ENCODE measurements at regions of chr9 and their contacts with region 1.

Region 1: GRCh38 chr9:36008774-36009300 is 27.9 kb upstream of the RECK start:
- DNase-seq: peak; percentile 54
- H3K4me3 ChIP-seq: no peak overlapping the region
- H3K27ac ChIP-seq: no peak overlapping the region
- H3K4me1 ChIP-seq: no peaks in the 10 kb centered on the region
- H3K27me3 ChIP-seq: peaks cover 2 to 16% of the 10 kb centered on the region in 2 experiments
- CTCF ChIP-seq: peak; percentile 80 to 100
- POLR2A ChIP-seq: no peak

Region 2: GRCh38 chr9:35903049-35903448 is 105.8 kb before region 1 on chr9:
- CTCF ChIA-PET with region 1: interaction called, 10 read pairs
- POLR2A ChIA-PET with region 1: no interaction called
- dilution Hi-C with region 1: no loop called
- intact Hi-C with region 1: loop called (anchors 5 kb)
- DNase-seq: peak; percentile 67
- H3K4me3 ChIP-seq: no peak overlapping the region
- H3K27ac ChIP-seq: no peak overlapping the region
- H3K4me1 ChIP-seq: peaks cover 35% of the 10 kb centered on the region
- H3K27me3 ChIP-seq: no peaks in the 10 kb centered on the region
- CTCF ChIP-seq: peak; percentile 48 to 62
- POLR2A ChIP-seq: no peak

Region 3: GRCh38 chr9:35954942-35955546 is 53.8 kb before region 1 on chr9:
- CTCF ChIA-PET with region 1: interaction called, 26 read pairs
- POLR2A ChIA-PET with region 1: no interaction called
- dilution Hi-C with region 1: no loop called
- intact Hi-C with region 1: loop called (anchors 5 kb)
- DNase-seq: peak; percentile 79
- H3K4me3 ChIP-seq: no peak overlapping the region
- H3K27ac ChIP-seq: no peak overlapping the region
- H3K4me1 ChIP-seq: peaks cover 19% of the 10 kb centered on the region
- H3K27me3 ChIP-seq: no peaks in the 10 kb centered on the region
- CTCF ChIP-seq: peak; percentile 71 to 75
- POLR2A ChIP-seq: no peak

Region 4: DNA sequence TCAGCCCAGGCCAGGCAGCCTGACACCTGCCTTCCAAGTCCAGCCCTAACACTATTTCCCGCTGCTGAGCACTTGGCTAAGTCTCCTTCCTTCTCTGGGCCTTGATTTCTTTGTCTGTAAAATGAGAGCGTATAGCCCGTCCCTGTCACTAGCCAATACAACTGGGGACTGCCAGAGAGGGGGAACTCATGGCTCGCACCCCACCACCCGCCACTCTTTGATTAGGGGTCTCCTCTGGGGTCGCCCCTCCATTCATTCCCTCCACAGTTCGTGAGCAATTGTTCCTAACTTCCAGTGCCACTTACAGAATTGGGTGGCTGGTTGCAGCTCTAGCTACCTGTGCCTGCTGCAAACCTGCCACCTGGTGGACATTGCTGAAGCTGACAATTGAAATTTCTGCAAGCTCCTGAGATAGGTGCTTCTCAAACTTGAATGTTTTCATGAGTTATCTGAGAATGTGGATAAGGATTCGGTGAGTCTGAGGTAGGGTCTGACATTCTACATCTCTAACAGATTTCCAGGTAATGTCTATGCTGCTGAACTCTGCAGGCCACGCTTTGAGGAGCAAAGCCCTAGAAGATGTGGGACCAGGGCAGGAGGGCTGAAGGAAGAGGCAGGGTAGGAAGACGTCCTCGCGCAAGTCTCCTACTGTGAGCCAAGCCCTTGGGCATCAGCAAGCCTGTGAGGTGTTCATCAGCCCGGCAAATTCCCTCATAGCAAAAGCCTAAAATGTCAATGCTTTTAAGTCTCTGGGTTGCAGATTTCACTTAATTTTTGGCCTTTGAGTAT is 14.6 kb after region 1 on chr9:
- CTCF ChIA-PET with region 1: interaction called, 58 read pairs
- POLR2A ChIA-PET with region 1: no interaction called
- dilution Hi-C with region 1: no loop called
- intact Hi-C with region 1: loop called (anchors 2 kb)
- DNase-seq: peak; percentile 71
- H3K4me3 ChIP-seq: no peak overlapping the region
- H3K27ac ChIP-seq: no peak overlapping the region
- H3K4me1 ChIP-seq: no peaks in the 10 kb centered on the region
- H3K27me3 ChIP-seq: no peaks in the 10 kb centered on the region
- CTCF ChIP-seq: peak; percentile 71 to 79
- POLR2A ChIP-seq: no peak

Region 5: GRCh38 chr9:36074055-36074454 is 65.2 kb after region 1 on chr9:
- CTCF ChIA-PET with region 1: no interaction called
- POLR2A ChIA-PET with region 1: no interaction called
- dilution Hi-C with region 1: no loop called
- intact Hi-C with region 1: no loop called
- DNase-seq: no peak
- H3K4me3 ChIP-seq: no peak overlapping the region
- H3K27ac ChIP-seq: no peak overlapping the region
- H3K4me1 ChIP-seq: no peaks in the 10 kb centered on the region
- H3K27me3 ChIP-seq: no peaks in the 10 kb centered on the region
- CTCF ChIP-seq: no peak
- POLR2A ChIP-seq: no peak

Region 6: GRCh38 chr9:36166101-36166927 is 157.5 kb after region 1 on chr9:
- CTCF ChIA-PET with region 1: interaction called, 50 read pairs
- POLR2A ChIA-PET with region 1: no interaction called
- dilution Hi-C with region 1: no loop called
- intact Hi-C with region 1: loop called (anchors 1 kb)
- DNase-seq: peak; percentile 80
- H3K4me3 ChIP-seq: peak overlapping the region in 2 of 3 experiments; percentile 4 to 51
- H3K27ac ChIP-seq: no peak overlapping the region
- H3K4me1 ChIP-seq: peaks cover 16% of the 10 kb centered on the region
- H3K27me3 ChIP-seq: no peaks in the 10 kb centered on the region
- CTCF ChIP-seq: peak; percentile 89 to 95
- POLR2A ChIP-seq: no peak

Region 7: DNA sequence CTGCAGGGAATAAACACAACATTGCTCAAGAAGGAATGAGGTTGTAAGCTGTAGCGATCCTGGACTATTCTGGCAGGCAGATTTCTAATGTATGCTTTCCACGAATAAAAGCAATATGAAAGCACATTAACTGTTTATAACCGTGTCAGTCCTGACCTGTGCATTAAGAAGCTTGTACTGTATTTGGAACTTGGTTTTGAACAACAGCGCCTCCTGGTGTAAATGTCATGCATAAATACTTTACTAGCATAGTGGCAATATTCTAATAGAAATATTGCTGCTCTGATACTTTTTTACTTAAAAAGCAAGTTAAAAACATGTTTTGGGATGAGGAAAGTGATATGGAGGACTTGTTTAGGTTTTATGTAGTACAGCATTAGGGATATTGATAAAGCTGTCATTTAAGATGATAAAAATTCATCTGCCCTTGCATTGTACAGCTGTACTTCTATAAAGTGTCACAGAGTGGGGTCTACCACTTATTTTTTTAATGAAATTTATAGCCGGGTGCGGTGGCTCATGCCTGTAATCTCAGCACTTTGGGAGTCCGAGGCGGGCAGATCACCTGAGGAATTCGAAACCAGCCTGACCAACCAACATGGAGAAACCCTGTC is 320.1 kb after region 1 on chr9:
- CTCF ChIA-PET with region 1: interaction called, 11 read pairs
- POLR2A ChIA-PET with region 1: no interaction called
- dilution Hi-C with region 1: no loop called
- intact Hi-C with region 1: no loop called
- DNase-seq: peak; percentile 78
- H3K4me3 ChIP-seq: no peak overlapping the region
- H3K27ac ChIP-seq: no peak overlapping the region
- H3K4me1 ChIP-seq: no peaks in the 10 kb centered on the region
- H3K27me3 ChIP-seq: no peaks in the 10 kb centered on the region
- CTCF ChIP-seq: peak; percentile 46 to 55
- POLR2A ChIP-seq: no peak

Region 8: DNA sequence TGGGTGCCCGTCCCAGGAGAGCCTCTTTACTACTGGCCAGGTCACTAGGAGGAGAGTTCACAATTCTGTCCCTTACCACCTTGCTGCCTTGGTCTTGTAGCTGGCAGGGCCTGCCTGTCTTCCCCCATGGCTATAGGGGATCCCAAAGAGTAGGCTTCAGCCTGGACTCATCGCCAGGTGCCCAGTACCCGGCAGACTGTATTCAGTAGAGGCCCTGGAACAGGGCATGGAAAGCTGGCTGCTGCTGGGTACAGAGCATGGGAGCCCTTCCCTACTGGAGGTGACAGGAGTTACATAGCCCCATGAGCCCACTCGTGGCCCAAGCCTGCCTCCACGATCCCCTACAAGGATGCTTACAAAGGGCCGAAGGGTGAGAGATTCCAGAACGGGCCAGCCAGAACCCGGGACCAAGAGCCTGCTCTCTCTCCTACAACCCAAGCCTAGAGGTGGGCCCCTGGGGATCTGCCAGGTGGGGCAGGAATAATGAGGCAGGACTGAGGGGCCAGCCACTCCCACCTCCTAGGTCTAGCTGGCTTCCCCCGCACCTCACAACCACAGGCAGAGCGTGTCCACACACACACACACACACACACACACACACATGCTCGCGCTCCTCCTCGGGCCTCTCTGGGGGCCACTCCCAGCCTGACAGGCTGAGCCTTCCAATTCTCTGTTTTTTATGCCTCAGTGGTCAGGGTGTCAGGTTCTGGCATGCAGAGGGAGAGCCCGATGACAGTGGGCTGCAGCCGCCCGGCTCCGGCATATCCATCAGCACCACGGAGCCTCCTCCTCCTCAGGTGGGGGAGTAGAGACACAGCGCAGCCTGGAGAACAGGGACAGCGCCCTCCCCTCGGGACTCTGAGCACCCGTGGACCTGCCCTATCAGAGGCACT is 839.2 kb after region 1 on chr9:
- CTCF ChIA-PET with region 1: no interaction called
- POLR2A ChIA-PET with region 1: no interaction called
- dilution Hi-C with region 1: no loop called
- intact Hi-C with region 1: no loop called
- DNase-seq: no peak
- H3K4me3 ChIP-seq: no peak overlapping the region
- H3K27ac ChIP-seq: no peak overlapping the region
- H3K4me1 ChIP-seq: no peaks in the 10 kb centered on the region
- H3K27me3 ChIP-seq: peaks cover 0 to 7% of the 10 kb centered on the region in 2 experiments
- CTCF ChIP-seq: no peak
- POLR2A ChIP-seq: no peak

Measured in endothelial cell of umbilical vein (primary cell).